Psoas muscle (tissue), 8 donors: ENCODE measurements at regions of chr12 and their contacts with region 1.

Region 1: DNA sequence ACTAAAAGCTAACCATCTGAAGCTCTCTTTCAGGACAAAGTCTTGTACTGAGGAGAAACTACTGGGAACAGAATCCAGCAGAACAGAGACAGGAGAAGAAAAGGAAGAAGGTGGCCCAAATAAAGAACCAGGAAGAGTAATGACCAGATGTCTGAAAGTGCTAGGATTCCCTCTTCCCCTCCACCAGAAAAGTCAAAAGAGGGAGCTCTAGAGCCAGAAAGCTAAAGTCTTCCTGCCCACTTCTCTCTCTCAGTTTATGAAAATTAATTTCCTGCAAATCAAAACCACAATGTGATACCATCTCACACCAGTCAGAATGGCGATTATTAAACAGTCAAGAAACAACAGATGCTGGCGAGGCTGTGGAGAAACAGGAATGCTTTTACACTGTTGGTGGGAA is 47.2 kb downstream of the SPPL3 start:
- DNase-seq: no peak
- ATAC-seq: no peak
- H3K4me3 ChIP-seq: no peak overlapping the region
- H3K27ac ChIP-seq: no peak overlapping the region
- H3K4me1 ChIP-seq: peaks cover 35% of the 10 kb centered on the region
- H3K27me3 ChIP-seq: no peaks in the 10 kb centered on the region
- CTCF ChIP-seq: peak; percentile 25

Region 2: DNA sequence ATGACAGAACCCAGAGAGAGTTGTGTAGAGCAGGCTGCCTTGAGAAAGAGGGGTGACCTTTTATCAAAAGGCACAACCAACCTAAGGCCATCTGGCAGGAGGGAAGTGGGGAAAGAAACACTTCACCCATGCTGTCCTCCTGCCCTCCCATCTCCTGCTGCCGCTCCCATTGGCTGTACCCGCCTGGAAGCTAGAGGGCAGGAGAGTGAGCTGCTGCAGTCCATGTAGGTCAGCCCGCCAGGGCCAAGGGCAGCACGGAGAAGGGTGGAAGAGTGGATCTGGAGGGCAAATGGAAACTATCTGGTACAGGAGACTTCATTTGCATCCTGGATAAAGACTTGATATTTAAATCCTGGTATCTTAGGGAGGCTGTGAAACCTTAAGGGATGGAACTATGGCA is 228.1 kb before region 1 on chr12:
- intact Hi-C with region 1: no loop called
- DNase-seq: no peak
- ATAC-seq: peak in 1 of 4 donors; percentile 40
- H3K4me3 ChIP-seq: no peak overlapping the region
- H3K27ac ChIP-seq: no peak overlapping the region
- H3K4me1 ChIP-seq: no peaks in the 10 kb centered on the region
- H3K27me3 ChIP-seq: no peaks in the 10 kb centered on the region
- CTCF ChIP-seq: no peak

Region 3: GRCh38 chr12:120725659-120726509 is 131.1 kb before region 1 on chr12 and contains the start of gene ACADS:
- intact Hi-C with region 1: no loop called
- DNase-seq: peak; percentile 92 to 96
- ATAC-seq: peak; percentile 96 to 99 (median 98)
- H3K4me3 ChIP-seq: peak within 1 kb of the TSS; percentile 91
- H3K27ac ChIP-seq: peak within 1 kb of the TSS; percentile 92
- H3K4me1 ChIP-seq: peaks cover 24% of the 10 kb centered on the region
- H3K27me3 ChIP-seq: no peaks in the 10 kb centered on the region
- CTCF ChIP-seq: no peak
- total RNA-seq, gene ACADS: 81.9 to 109 (median 102) TPM

Region 4: GRCh38 chr12:120904197-120904773 is 47.3 kb after region 1 on chr12 and contains the start of gene SPPL3:
- intact Hi-C with region 1: loop called (anchors 5 kb)
- DNase-seq: peak; percentile 94 to 96
- ATAC-seq: peak; percentile 94 to 96 (median 95)
- H3K4me3 ChIP-seq: peak within 1 kb of the TSS; percentile 94
- H3K27ac ChIP-seq: peak within 1 kb of the TSS; percentile 94
- H3K4me1 ChIP-seq: peaks cover 31% of the 10 kb centered on the region
- H3K27me3 ChIP-seq: no peaks in the 10 kb centered on the region
- CTCF ChIP-seq: no peak
- total RNA-seq, gene SPPL3: 17.5 to 24.2 (median 19.7) TPM